Naive thymus-derived CD4-positive, alpha-beta T cell (primary cell): ENCODE measurements at regions of chr16 and their contacts with region 1.

Region 1: GRCh38 chr16:4624015-4624826 is at the start of gene MGRN1:
- DNase-seq: peak; percentile 85 to 94 (median 90)
- ATAC-seq: peak; percentile 93
- H3K4me3 ChIP-seq: peak within 1 kb of the TSS; percentile 72
- H3K4me3 Mint-ChIP-seq: peak within 1 kb of the TSS; percentile 91 to 99 (median 94)
- H3K27ac ChIP-seq: peak within 1 kb of the TSS; percentile 83
- H3K27ac Mint-ChIP-seq: peak within 1 kb of the TSS; percentile 95 to 98 (median 97)
- H3K4me1 ChIP-seq: peaks cover 18 to 21% of the 10 kb centered on the region in 2 donors
- H3K4me1 Mint-ChIP-seq: peaks cover 25 to 43% (median 38%) of the 10 kb centered on the region in 7 donors
- H3K27me3 ChIP-seq: no peaks in the 10 kb centered on the region
- H3K27me3 Mint-ChIP-seq: no peaks in the 10 kb centered on the region
- total RNA-seq, gene MGRN1: 62.6 to 103 (median 81.2) TPM

Region 2: DNA sequence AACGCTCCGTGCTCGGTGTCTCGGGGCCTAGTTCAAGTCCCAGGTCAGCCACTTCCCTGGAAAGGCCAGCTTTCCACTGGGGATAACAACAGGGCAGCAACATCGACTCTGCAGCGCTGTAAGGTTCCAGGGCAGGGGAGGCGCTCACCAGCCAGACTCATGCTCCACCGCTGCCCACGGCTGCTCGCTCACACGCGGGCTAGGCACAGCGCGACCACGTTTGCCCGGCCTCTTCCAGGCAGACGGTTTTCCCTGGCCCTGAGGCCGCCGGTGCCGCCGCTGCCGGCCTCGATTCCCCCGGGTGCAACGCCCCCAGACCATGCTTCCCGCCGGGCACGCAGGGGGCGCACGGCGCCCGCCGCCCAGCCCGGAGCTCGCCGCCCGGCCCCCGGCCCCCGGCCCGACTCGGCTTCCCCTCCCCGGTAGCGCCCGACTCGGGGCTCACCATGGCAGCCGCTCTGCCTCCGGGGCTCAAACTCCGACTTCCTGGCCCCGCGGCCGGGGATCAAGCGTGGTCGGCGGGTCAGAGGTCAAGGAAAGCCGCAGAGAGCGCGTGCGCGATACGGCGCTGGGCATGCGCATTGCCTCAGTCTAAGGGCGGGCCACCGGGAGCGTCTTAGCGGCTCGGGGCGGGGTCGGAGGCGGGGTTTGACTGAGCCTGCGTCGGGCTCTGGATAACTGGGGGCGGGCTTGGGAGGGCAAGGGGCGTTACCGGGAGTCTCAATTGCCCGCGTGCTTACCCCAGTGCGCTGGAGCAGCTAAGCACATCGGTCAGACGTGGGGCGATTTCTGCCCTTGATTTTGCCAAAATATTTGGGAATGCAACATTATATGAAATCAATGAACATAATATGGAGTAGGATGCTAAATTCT is 273.2 kb before region 1 on chr16 and contains the start of gene PAM16:
- CTCF ChIA-PET with region 1: no interaction called
- POLR2A ChIA-PET with region 1: no interaction called
- intact Hi-C with region 1: loop called in 1 of 2 experiments (anchors 2 kb)
- DNase-seq: peak; percentile 95 to 99 (median 98)
- ATAC-seq: peak; percentile 93
- H3K4me3 ChIP-seq: peak within 1 kb of the TSS; percentile 91
- H3K4me3 Mint-ChIP-seq: peak within 1 kb of the TSS; percentile 90 to 98 (median 94)
- H3K27ac ChIP-seq: peak within 1 kb of the TSS; percentile 87
- H3K27ac Mint-ChIP-seq: peak within 1 kb of the TSS; percentile 76 to 95 (median 92)
- H3K4me1 ChIP-seq: peaks cover 5 to 7% of the 10 kb centered on the region in 2 donors
- H3K4me1 Mint-ChIP-seq: peaks cover 11 to 38% (median 32%) of the 10 kb centered on the region in 7 donors
- H3K27me3 ChIP-seq: no peaks in the 10 kb centered on the region
- H3K27me3 Mint-ChIP-seq: no peaks in the 10 kb centered on the region
- total RNA-seq, gene PAM16: 34.1 to 46.2 (median 45.0) TPM

Region 3: DNA sequence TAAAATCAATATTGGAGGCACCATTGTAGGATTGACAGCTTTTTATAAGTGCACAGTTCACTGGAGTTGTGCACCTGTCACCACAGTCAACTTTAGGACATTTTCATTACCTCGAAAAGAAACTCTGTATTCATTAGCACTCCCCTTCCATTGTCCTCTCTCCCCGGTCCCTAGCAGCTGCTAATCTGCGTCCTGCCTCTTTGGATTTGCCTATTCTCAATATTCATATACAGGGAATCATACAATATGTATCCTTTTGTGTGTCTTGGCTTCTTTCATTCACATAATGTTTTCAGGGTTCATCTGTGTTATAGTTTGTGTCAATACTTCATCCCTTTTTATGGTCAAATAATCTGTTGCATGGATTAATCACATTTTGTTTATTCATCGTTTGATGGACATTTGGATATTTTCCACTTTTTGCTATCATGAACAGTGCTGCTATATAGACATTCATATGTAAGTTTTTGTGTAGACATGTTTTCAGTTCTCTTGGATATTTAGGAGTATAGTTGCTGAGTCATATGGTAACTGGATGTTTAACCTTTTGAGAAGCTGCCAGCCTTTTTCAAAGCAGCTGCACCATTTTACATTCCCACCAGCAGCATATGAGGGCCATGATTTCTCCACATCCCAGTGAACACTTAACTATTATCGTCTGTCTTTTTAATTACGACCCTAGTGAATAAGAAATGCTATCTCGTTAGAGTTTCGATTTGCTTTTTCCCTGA is 188.7 kb before region 1 on chr16:
- CTCF ChIA-PET with region 1: no interaction called
- POLR2A ChIA-PET with region 1: no interaction called
- intact Hi-C with region 1: no loop called
- DNase-seq: no peak
- ATAC-seq: no peak
- H3K4me3 ChIP-seq: no peak overlapping the region
- H3K4me3 Mint-ChIP-seq: no peak overlapping the region
- H3K27ac ChIP-seq: no peak overlapping the region
- H3K27ac Mint-ChIP-seq: peak overlapping the region in 3 of 9 donors; percentile 56 to 62 (median 58)
- H3K4me1 ChIP-seq: no peaks in the 10 kb centered on the region
- H3K4me1 Mint-ChIP-seq: peaks cover 9 to 46% (median 22%) of the 10 kb centered on the region in 7 donors
- H3K27me3 ChIP-seq: no peaks in the 10 kb centered on the region
- H3K27me3 Mint-ChIP-seq: no peaks in the 10 kb centered on the region

Region 4: DNA sequence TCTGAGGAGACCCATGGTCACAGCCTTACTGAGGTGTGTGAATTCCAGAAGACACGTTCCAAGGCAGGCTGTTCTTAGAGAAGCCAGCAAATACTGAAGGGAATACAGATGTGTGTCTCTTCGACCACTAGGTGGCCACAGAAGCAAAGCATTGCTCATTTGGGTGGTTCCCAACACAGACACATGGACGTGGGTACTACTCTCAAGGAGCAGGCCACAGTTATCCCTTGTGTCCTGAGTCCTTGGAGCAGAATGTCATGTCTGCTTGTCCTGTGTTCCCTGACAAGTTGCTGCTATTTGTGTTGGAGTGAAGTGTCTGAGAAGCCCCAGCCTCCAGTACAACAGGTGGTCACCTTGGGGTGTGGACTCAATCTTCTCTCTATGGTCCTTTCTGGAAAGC is 117.8 kb before region 1 on chr16:
- CTCF ChIA-PET with region 1: interaction called, 7 read pairs
- POLR2A ChIA-PET with region 1: interaction called, 7 read pairs
- intact Hi-C with region 1: loop called (anchors 1 to 5 kb)
- DNase-seq: peak in 8 of 9 donors; percentile 40 to 75 (median 65)
- ATAC-seq: peak; percentile 58
- H3K4me3 ChIP-seq: peak overlapping the region; percentile 55
- H3K4me3 Mint-ChIP-seq: peak overlapping the region; percentile 71 to 87 (median 80)
- H3K27ac ChIP-seq: peak overlapping the region; percentile 93
- H3K27ac Mint-ChIP-seq: peak overlapping the region; percentile 94 to 100 (median 99)
- H3K4me1 ChIP-seq: peaks cover 40 to 58% of the 10 kb centered on the region in 2 donors
- H3K4me1 Mint-ChIP-seq: peaks cover 39 to 77% (median 60%) of the 10 kb centered on the region in 7 donors
- H3K27me3 ChIP-seq: no peaks in the 10 kb centered on the region
- H3K27me3 Mint-ChIP-seq: no peaks in the 10 kb centered on the region

Region 5: GRCh38 chr16:4654011-4654963 is 30.1 kb after region 1 on chr16:
- CTCF ChIA-PET with region 1: interaction called, 7 read pairs
- POLR2A ChIA-PET with region 1: no interaction called
- intact Hi-C with region 1: loop called (anchors 1 to 2 kb)
- DNase-seq: no peak
- ATAC-seq: no peak
- H3K4me3 ChIP-seq: no peak overlapping the region
- H3K4me3 Mint-ChIP-seq: no peak overlapping the region
- H3K27ac ChIP-seq: no peak overlapping the region
- H3K27ac Mint-ChIP-seq: peak overlapping the region in 2 of 9 donors; percentile 30 to 51
- H3K4me1 ChIP-seq: peaks cover 0 to 17% of the 10 kb centered on the region in 2 donors
- H3K4me1 Mint-ChIP-seq: peaks cover 17 to 34% (median 24%) of the 10 kb centered on the region in 7 donors
- H3K27me3 ChIP-seq: no peaks in the 10 kb centered on the region
- H3K27me3 Mint-ChIP-seq: no peaks in the 10 kb centered on the region

Region 6: DNA sequence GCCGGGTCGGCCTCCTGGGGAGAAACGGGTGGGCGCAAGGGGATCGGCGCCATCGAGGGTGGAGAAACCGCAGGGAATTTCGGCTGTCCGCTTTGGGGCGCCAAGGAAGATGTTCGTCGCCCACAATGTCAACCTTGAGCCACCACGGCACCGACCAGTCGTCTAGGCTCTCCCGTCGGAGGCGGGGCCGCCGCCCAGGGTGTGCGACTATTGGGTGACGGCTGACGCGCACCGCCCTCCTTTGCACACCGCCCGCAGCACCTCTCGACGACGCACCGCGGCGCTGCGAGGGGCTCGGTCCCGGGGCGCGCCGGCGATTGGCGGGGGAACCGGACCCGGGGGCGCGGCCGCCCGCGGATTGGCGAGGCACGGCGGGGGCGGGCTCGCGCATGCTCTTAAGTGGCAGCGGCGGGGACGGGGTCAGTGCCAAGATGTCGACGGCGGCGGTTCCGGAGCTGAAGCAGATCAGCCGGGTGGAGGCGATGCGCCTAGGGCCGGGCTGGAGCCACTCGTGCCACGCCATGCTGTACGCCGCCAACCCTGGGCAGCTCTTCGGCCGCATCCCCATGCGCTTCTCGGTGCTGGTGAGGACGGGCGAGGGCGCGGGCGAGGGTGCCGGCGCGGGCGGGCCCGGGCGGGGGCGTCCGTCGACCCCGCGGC is 69.2 kb after region 1 on chr16 and contains the start of gene NUDT16L1:
- CTCF ChIA-PET with region 1: interaction called, 6 read pairs
- POLR2A ChIA-PET with region 1: interaction called, 16 read pairs
- intact Hi-C with region 1: loop called (anchors 1 to 2 kb)
- DNase-seq: peak; percentile 95 to 99 (median 98)
- ATAC-seq: peak; percentile 97
- H3K4me3 ChIP-seq: peak within 1 kb of the TSS; percentile 93
- H3K4me3 Mint-ChIP-seq: peak within 1 kb of the TSS; percentile 78 to 91 (median 86)
- H3K27ac ChIP-seq: peak within 1 kb of the TSS; percentile 93
- H3K27ac Mint-ChIP-seq: peak within 1 kb of the TSS; percentile 73 to 93 (median 88)
- H3K4me1 ChIP-seq: peaks cover 14% of the 10 kb centered on the region in 2 donors
- H3K4me1 Mint-ChIP-seq: peaks cover 8 to 23% (median 14%) of the 10 kb centered on the region in 7 donors
- H3K27me3 ChIP-seq: no peaks in the 10 kb centered on the region
- H3K27me3 Mint-ChIP-seq: no peaks in the 10 kb centered on the region
- total RNA-seq, gene NUDT16L1: 42.8 to 65.4 (median 53.3) TPM

Region 7: DNA sequence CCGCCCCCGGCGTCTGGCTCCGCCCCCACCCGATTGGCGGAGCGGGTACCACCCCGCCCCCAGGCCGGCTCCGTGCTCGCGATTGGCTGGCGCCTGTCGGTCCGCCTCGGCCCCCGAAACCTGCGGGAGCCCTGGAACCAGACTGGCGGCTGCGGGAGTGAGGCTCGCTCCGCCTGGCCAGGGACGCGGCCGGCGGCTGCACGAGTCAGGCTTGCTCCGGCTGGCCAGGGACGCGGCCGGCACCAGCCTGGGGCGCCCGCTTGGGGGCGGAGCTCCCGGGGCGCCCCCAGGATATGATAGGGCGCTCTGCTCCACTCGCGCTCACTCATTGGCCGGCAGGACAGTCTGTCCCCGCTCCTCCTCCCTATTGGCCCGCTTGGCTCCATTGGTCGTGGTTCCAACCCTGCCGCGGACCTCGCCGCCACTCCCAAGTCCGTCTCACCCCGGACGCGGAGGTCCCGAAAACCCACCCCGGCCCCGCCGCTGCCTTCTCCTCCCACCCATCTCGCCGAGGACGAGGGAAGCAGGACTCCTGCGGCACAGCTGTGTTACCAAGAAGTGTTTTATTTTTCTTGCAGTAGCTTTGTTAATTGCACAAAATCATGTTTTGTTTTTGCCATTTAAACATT is 178.6 kb after region 1 on chr16:
- CTCF ChIA-PET with region 1: no interaction called
- POLR2A ChIA-PET with region 1: no interaction called
- intact Hi-C with region 1: loop called (anchors 1 to 2 kb)
- DNase-seq: peak; percentile 82 to 97 (median 93)
- ATAC-seq: peak; percentile 93
- H3K4me3 ChIP-seq: peak overlapping the region; percentile 79
- H3K4me3 Mint-ChIP-seq: peak overlapping the region; percentile 81 to 86 (median 86)
- H3K27ac ChIP-seq: peak overlapping the region; percentile 60
- H3K27ac Mint-ChIP-seq: peak overlapping the region in 8 of 9 donors; percentile 36 to 84 (median 74)
- H3K4me1 ChIP-seq: peaks cover 10 to 18% of the 10 kb centered on the region in 2 donors
- H3K4me1 Mint-ChIP-seq: peaks cover 7 to 19% (median 12%) of the 10 kb centered on the region in 7 donors
- H3K27me3 ChIP-seq: no peaks in the 10 kb centered on the region
- H3K27me3 Mint-ChIP-seq: no peaks in the 10 kb centered on the region